ENCODE measurements at regions of chr18 and their contacts with region 1.

Region 1: DNA sequence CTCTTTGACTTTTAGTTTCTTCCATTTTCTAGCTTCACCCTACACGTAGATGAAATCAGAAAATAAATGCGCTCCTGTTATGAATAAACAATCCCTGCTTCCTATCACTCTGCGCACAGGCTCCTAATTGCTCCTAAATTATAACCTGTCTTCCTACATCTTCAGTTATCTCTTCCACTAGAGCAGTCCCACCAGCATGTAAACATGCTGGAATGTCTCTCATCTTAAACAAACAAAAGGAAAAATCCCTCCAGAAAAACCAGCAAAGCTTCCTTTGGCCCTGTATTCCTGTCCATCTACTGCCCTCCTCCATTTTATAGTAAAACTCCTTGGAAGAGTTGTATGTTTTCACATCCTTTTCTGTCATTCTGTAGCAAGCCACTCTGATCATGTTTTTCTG is 86.1 kb downstream of the SMCHD1 start:
- DNase-seq: no peak
- H3K4me3 Mint-ChIP-seq: no peak overlapping the region
- H3K27ac Mint-ChIP-seq: no peak overlapping the region
- H3K4me1 Mint-ChIP-seq: peaks cover under 1% of the 10 kb centered on the region
- H3K27me3 Mint-ChIP-seq: no peaks in the 10 kb centered on the region

Region 2: GRCh38 chr18:2680216-2680792 is 61.3 kb before region 1 on chr18:
- intact Hi-C with region 1: loop called (anchors 5 kb)
- DNase-seq: no peak
- H3K4me3 Mint-ChIP-seq: no peak overlapping the region
- H3K27ac Mint-ChIP-seq: peak overlapping the region; percentile 34
- H3K4me1 Mint-ChIP-seq: peaks cover 43% of the 10 kb centered on the region
- H3K27me3 Mint-ChIP-seq: no peaks in the 10 kb centered on the region

Region 3: DNA sequence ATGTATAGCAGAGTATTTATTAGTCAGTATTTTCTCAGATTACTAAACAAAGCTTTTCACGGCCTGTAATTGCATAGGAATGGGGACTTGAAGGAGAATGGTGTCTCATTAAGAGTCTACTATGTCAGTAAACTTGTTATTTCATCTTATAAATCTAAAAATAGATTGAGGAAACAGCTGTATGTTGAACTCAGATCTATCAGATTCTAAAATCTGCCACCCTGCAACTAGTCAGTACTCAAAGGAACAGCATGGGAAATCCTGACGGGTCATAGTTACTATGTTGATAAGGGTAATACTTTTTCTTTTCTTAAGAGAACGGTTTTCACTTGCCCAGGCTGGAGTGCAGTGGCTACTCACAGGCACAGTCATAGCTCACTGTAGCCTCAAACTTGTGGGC is 35.0 kb after region 1 on chr18:
- intact Hi-C with region 1: loop called (anchors 5 kb)
- DNase-seq: no peak
- H3K4me3 Mint-ChIP-seq: no peak overlapping the region
- H3K27ac Mint-ChIP-seq: no peak overlapping the region
- H3K4me1 Mint-ChIP-seq: peaks cover 1% of the 10 kb centered on the region
- H3K27me3 Mint-ChIP-seq: no peaks in the 10 kb centered on the region

Region 4: DNA sequence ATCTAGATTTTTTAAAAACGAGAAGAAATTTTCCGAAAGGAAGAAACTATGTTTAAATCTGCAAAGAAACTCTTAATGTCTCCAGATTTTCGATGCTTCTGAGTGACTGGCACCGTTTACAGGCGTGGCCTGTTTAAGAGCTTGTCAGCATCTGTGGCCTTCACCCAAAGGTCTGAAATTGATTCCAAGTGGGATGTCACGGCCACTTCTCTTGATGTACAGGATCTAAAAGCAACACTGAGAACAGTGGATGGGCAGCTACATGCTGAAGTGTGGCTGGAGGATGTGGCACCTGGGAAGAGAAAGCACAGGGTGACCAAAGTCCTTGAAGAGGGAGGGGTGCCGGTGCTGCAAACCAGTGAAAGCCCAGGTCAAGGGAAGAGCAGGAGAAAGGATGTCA is 133.1 kb after region 1 on chr18:
- intact Hi-C with region 1: no loop called
- DNase-seq: no peak
- H3K4me3 Mint-ChIP-seq: no peak overlapping the region
- H3K27ac Mint-ChIP-seq: no peak overlapping the region
- H3K4me1 Mint-ChIP-seq: peaks cover 15% of the 10 kb centered on the region
- H3K27me3 Mint-ChIP-seq: no peaks in the 10 kb centered on the region

Measured in activated T-helper 2 cell treated with anti-CD3 and anti-CD28 coated beads, Interferon-gamma antibody, Interleukin-2, Interleukin-4, amounts not matched to agents 10 μg/mL and 5 μg/mL and 100 μg/mL, durations not matched to agents 14 hours and 24 hours and 36 hours (primary cell).